Activated B cell treated with CpG ODN at 0.5 μM for 24 hours (primary cell): ENCODE measurements at regions of chr3 and their contacts with region 1.

Region 1: GRCh38 chr3:132399054-132399929 is 18.0 kb upstream of the DNAJC13 start:
- DNase-seq: no peak
- ATAC-seq: no peak
- H3K4me3 Mint-ChIP-seq: no peak overlapping the region
- H3K27ac Mint-ChIP-seq: no peak overlapping the region
- H3K4me1 Mint-ChIP-seq: no peaks in the 10 kb centered on the region
- H3K27me3 Mint-ChIP-seq: no peaks in the 10 kb centered on the region
- CTCF ChIP-seq: no peak

Region 2: GRCh38 chr3:130759699-130760338 is 1639.5 kb before region 1 on chr3:
- CTCF ChIA-PET with region 1: no interaction called
- POLR2A ChIA-PET with region 1: no interaction called
- intact Hi-C with region 1: loop called (anchors 5 kb)
- DNase-seq: no peak
- ATAC-seq: peak; percentile 57
- H3K4me3 Mint-ChIP-seq: no peak overlapping the region
- H3K27ac Mint-ChIP-seq: no peak overlapping the region
- H3K4me1 Mint-ChIP-seq: no peaks in the 10 kb centered on the region
- H3K27me3 Mint-ChIP-seq: peaks cover 12% of the 10 kb centered on the region
- CTCF ChIP-seq: no peak

Region 3: DNA sequence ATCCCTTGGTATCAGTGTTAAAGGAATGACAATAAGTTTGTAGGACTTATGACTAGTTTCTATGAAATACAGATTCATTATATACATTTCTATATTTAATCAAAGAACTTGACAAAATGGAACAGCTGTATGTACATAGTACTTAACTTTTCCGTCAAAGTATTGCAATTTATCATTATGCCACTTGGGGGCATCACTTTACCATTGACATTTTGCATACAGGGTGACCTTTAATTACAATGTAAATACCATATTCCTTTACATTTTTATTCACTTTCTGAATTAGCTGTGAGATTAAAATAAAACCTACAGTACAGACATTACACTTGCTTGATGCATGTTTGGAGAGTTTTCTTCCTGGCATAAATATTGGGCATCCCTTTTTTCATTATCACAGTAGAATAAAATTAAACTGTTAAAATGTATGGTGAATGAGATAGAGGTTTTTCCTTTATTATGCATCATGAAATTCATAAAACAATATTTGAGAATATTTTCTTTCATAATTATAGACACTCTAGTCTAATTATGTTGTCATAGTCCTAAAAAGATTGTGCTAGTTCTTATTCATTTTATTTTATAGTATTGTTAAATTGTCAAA is 1365.7 kb before region 1 on chr3:
- CTCF ChIA-PET with region 1: interaction called, 3 read pairs
- POLR2A ChIA-PET with region 1: no interaction called
- intact Hi-C with region 1: loop called (anchors 1 kb)
- DNase-seq: no peak
- ATAC-seq: peak; percentile 60
- H3K4me3 Mint-ChIP-seq: no peak overlapping the region
- H3K27ac Mint-ChIP-seq: no peak overlapping the region
- H3K4me1 Mint-ChIP-seq: no peaks in the 10 kb centered on the region
- H3K27me3 Mint-ChIP-seq: no peaks in the 10 kb centered on the region
- CTCF ChIP-seq: peak; percentile 71

Region 4: GRCh38 chr3:132034486-132035464 is 364.5 kb before region 1 on chr3 and contains the start of gene CPNE4:
- CTCF ChIA-PET with region 1: no interaction called
- POLR2A ChIA-PET with region 1: no interaction called
- intact Hi-C with region 1: loop called (anchors 10 kb)
- DNase-seq: no peak
- ATAC-seq: no peak
- H3K4me3 Mint-ChIP-seq: no peak within 1 kb of the TSS
- H3K27ac Mint-ChIP-seq: no peak within 1 kb of the TSS
- H3K4me1 Mint-ChIP-seq: peaks cover 9% of the 10 kb centered on the region
- H3K27me3 Mint-ChIP-seq: peaks cover 65% of the 10 kb centered on the region
- CTCF ChIP-seq: no peak
- total RNA-seq, gene CPNE4: not detected in 2 replicates

Region 5: GRCh38 chr3:132253262-132253878 is 145.9 kb before region 1 on chr3:
- CTCF ChIA-PET with region 1: no interaction called
- POLR2A ChIA-PET with region 1: no interaction called
- intact Hi-C with region 1: loop called (anchors 1 kb)
- DNase-seq: no peak
- ATAC-seq: no peak
- H3K4me3 Mint-ChIP-seq: no peak overlapping the region
- H3K27ac Mint-ChIP-seq: no peak overlapping the region
- H3K4me1 Mint-ChIP-seq: no peaks in the 10 kb centered on the region
- H3K27me3 Mint-ChIP-seq: no peaks in the 10 kb centered on the region
- CTCF ChIP-seq: no peak

Region 6: GRCh38 chr3:132352541-132353143 is 46.6 kb before region 1 on chr3:
- CTCF ChIA-PET with region 1: interaction called, 26 read pairs
- POLR2A ChIA-PET with region 1: no interaction called
- intact Hi-C with region 1: loop called (anchors 1 kb)
- DNase-seq: no peak
- ATAC-seq: peak; percentile 84
- H3K4me3 Mint-ChIP-seq: no peak overlapping the region
- H3K27ac Mint-ChIP-seq: no peak overlapping the region
- H3K4me1 Mint-ChIP-seq: no peaks in the 10 kb centered on the region
- H3K27me3 Mint-ChIP-seq: no peaks in the 10 kb centered on the region
- CTCF ChIP-seq: no peak